ENCODE measurements at regions of chr6 and their contacts with region 1.

Region 1: GRCh38 chr6:99613409-99613704 is 6.7 kb downstream of the PRDM13 start:
- DNase-seq: peak; percentile 47
- ATAC-seq: peak; percentile 83
- H3K4me3 Mint-ChIP-seq: peak overlapping the region; percentile 75
- H3K27ac Mint-ChIP-seq: no peak overlapping the region
- H3K4me1 Mint-ChIP-seq: peaks cover 17% of the 10 kb centered on the region
- H3K27me3 Mint-ChIP-seq: peaks cover 72% of the 10 kb centered on the region
- CTCF ChIP-seq: no peak

Region 2: DNA sequence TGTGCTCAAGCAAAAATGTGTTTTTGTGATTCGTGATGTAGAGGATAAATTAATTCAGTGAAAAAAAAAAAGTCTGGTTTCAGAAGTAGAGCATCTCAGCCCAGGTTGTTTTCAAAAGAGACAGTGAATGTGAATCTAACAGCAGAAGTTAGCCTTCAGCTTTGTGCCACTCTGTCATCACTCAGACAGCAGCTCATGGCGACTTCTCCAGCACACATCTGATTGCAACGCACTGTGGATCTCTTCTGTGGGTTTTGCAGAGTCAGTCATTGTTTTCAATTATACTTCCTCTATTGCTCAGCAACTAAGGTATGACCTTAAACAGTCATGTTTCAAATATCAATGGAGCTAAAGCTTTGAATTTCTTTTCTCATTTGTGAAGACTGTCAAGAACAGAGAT is 1114.5 kb before region 1 on chr6:
- CTCF ChIA-PET with region 1: no interaction called
- POLR2A ChIA-PET with region 1: no interaction called
- intact Hi-C with region 1: no loop called
- DNase-seq: no peak
- ATAC-seq: no peak
- H3K4me3 Mint-ChIP-seq: no peak overlapping the region
- H3K27ac Mint-ChIP-seq: no peak overlapping the region
- H3K4me1 Mint-ChIP-seq: no peaks in the 10 kb centered on the region
- H3K27me3 Mint-ChIP-seq: no peaks in the 10 kb centered on the region
- CTCF ChIP-seq: no peak

Region 3: GRCh38 chr6:99425647-99426453 is 187.5 kb before region 1 on chr6:
- CTCF ChIA-PET with region 1: no interaction called
- POLR2A ChIA-PET with region 1: no interaction called
- intact Hi-C with region 1: no loop called
- DNase-seq: peak; percentile 56
- ATAC-seq: peak; percentile 54
- H3K4me3 Mint-ChIP-seq: peak overlapping the region; percentile 99
- H3K27ac Mint-ChIP-seq: peak overlapping the region; percentile 100
- H3K4me1 Mint-ChIP-seq: peaks cover 52% of the 10 kb centered on the region
- H3K27me3 Mint-ChIP-seq: no peaks in the 10 kb centered on the region
- CTCF ChIP-seq: no peak

Region 4: DNA sequence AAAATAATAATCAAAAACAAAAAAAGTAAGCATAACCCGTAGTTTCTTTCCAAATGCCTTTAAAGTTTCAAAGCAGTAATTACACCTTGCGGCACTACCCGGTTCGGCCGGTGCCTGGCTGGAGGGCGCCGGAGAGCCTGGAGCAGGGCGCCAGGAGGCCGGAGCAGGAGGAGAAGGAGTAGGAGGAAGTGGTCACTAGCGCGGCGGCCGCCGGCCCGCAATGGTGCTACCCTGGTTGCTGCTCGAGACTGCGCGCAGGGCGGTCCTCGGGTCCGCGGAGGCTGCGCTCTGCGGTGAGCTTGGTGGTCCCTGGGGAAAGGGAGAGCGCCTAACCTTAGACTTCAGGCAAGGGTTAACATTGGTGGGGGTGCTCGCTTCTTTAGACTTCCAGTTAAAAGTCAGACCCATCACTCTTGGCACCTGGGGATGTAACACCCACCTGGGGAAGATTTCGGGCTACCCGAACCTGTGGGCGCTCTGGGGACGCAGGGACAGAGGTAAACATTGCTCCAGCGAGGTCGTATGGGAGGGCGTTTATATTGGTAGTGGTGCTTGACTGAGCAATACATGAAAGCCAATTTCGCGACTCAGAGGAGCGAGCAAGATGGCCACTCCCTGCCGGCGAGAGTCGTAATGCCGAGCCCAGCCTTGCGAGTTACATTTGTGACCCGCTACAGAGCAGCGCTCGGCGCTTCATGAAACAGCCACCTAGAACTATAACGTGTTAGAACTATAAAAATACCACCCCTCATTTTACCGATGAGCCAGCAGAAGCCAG is 92.3 kb before region 1 on chr6:
- CTCF ChIA-PET with region 1: no interaction called
- POLR2A ChIA-PET with region 1: no interaction called
- intact Hi-C with region 1: loop called (anchors 2 kb)
- DNase-seq: peak; percentile 71
- ATAC-seq: peak; percentile 86
- H3K4me3 Mint-ChIP-seq: peak overlapping the region; percentile 99
- H3K27ac Mint-ChIP-seq: peak overlapping the region; percentile 97
- H3K4me1 Mint-ChIP-seq: peaks cover 41% of the 10 kb centered on the region
- H3K27me3 Mint-ChIP-seq: no peaks in the 10 kb centered on the region
- CTCF ChIP-seq: peak; percentile 33

Region 5: GRCh38 chr6:99588618-99589289 is 24.6 kb before region 1 on chr6:
- CTCF ChIA-PET with region 1: interaction called, 4 read pairs
- POLR2A ChIA-PET with region 1: interaction called, 4 read pairs
- intact Hi-C with region 1: loop called (anchors 2 kb)
- DNase-seq: peak; percentile 38
- ATAC-seq: peak; percentile 83
- H3K4me3 Mint-ChIP-seq: peak overlapping the region; percentile 86
- H3K27ac Mint-ChIP-seq: peak overlapping the region; percentile 46
- H3K4me1 Mint-ChIP-seq: peaks cover 30% of the 10 kb centered on the region
- H3K27me3 Mint-ChIP-seq: peaks cover 56% of the 10 kb centered on the region
- CTCF ChIP-seq: no peak

Region 6: DNA sequence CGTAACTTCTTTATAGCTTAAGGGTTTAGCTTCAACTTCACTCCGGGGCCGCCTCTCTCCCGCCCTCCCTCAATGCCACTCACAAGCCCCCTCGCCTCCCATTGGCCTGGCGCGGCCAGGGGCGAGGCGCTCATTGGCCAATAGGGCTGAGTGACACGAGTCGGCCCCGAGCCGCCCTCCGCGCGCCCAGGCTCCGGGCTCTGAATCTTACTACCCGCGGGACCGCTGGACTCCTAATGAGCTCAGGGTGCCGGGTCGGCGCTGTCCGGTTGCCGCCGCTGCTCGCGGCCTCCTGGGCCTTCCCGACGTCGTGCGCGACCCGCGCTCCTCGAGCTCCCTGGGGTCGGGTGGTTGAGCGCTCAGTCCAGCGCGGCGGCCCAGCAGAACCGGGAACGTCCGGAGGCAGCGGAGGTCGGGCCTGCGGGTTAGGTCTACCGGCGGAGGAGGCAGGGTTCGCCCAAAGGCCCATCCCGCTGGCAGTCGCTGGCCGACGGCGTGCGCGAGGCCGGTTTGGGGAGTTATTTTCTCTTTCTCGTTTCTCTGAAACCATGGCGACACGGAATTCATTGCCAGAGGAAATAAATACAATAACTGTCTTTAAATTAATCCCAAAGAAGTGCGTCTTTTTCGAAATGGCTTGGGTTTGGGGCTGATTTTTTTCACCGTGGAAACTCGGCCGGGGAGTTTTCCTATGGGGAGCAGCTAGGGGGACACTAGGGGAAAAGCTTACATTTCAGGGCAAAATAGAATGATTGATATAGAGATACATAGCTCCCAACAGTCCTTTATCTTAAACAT is 851.7 kb after region 1 on chr6 and contains the start of gene SIM1:
- CTCF ChIA-PET with region 1: no interaction called
- POLR2A ChIA-PET with region 1: no interaction called
- intact Hi-C with region 1: loop called (anchors 5 kb)
- DNase-seq: no peak
- ATAC-seq: no peak
- H3K4me3 Mint-ChIP-seq: peak within 1 kb of the TSS; percentile 48
- H3K27ac Mint-ChIP-seq: peak within 1 kb of the TSS; percentile 46
- H3K4me1 Mint-ChIP-seq: peaks cover 20% of the 10 kb centered on the region
- H3K27me3 Mint-ChIP-seq: peaks cover 72% of the 10 kb centered on the region
- CTCF ChIP-seq: no peak
- total RNA-seq, gene SIM1: not detected in 2 replicates